H1 (cell line): ENCODE measurements at regions of chr13 and their contacts with region 1.

Region 1: DNA sequence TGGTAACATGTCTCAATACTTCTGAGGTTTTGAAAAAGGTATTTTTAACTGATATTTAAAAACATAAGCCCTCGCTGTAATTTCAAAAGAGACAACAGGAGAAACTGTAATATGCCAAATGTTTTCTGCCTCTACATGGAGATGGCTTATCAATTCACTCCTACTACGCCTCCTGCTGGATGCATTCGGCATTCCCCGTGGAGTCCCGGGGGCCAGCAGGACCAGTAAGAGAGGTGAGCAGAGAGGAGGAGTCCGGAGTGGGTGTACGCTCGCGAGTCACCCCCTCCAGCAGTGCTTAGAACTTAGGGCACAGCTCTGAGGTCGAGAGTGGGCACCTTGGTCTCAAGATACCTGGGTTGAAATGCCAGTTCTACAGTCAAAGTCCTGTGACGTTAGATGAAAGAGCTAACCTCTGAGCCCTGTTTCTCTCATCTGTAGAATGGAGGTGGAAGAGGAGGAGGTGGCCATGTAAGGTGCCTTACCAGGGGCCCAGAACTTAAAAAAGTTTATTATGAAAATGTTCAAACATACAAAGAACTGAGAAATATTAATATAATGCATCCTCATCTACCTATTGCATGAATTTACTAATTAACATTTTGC is 110.2 kb downstream of the STK24 start:
- DNase-seq: peak in 1 of 2 experiments; percentile 94
- H3K4me3 ChIP-seq: no peak overlapping the region
- H3K27ac ChIP-seq: no peak overlapping the region
- H3K4me1 ChIP-seq: peaks cover 0 to 3% (median 1%) of the 10 kb centered on the region in 4 experiments; a peak in 2 of 7 replicates
- H3K27me3 ChIP-seq: no peaks in the 10 kb centered on the region
- CTCF ChIP-seq: peak; percentile 75 to 89 (median 87)
- EP300 ChIP-seq: no peak
- POLR2A ChIP-seq: no peak
- RAD21 ChIP-seq: peak; percentile 65 to 73

Region 2: GRCh38 chr13:98504371-98504963 is 37.7 kb after region 1 on chr13:
- CTCF ChIA-PET with region 1: interaction called, 14 read pairs
- POLR2A ChIA-PET with region 1: no interaction called
- DNase-seq: no peak
- H3K4me3 ChIP-seq: no peak overlapping the region
- H3K27ac ChIP-seq: no peak overlapping the region
- H3K4me1 ChIP-seq: peaks cover 6 to 22% (median 17%) of the 10 kb centered on the region in 4 experiments
- H3K27me3 ChIP-seq: no peaks in the 10 kb centered on the region
- CTCF ChIP-seq: no peak
- EP300 ChIP-seq: no peak
- POLR2A ChIP-seq: no peak
- RAD21 ChIP-seq: no peak

Region 3: DNA sequence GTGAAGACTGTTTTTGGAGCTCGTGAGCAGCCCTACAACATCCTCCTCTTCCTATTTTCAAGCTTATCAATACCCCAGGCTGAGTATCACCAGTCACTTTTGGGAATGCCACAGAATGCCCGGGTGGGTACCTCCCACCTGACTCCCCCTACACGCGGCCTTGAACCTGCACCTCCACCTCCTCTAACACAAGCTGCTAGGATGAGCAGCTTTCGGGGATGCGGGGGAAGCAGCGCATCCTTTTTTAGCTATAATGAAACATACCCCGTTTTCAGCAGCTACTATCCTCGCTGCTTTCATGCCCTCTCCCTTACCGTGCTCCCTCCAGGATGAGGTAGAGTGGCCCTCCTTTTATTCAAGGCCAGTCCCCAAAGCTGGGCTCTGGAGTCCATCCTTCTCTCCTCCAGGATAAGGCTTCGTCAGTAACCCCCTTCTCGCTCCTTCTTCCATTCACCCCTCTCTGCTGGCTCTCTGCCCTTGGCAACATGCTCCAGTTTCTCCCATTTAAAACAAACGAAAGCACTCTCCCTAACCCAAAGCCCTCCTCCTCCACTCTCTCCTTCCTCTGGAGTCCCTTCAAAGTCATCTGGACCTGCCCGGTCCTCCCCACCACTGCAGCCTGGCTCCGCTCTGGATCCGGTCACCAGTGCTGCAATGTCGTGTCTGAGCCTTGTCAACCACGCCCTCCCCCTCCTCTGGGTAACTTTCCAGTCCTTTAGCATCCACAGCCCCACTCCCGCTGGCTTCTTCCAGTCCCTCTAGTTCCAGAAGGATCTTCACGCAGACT is 54.9 kb after region 1 on chr13:
- CTCF ChIA-PET with region 1: interaction called, 13 read pairs
- POLR2A ChIA-PET with region 1: interaction called, 3 read pairs
- DNase-seq: no peak
- H3K4me3 ChIP-seq: no peak overlapping the region
- H3K27ac ChIP-seq: no peak overlapping the region
- H3K4me1 ChIP-seq: peaks cover 0 to 50% (median 24%) of the 10 kb centered on the region in 4 experiments; a peak in 6 of 7 replicates
- H3K27me3 ChIP-seq: no peaks in the 10 kb centered on the region
- CTCF ChIP-seq: no peak
- EP300 ChIP-seq: no peak
- POLR2A ChIP-seq: no peak
- RAD21 ChIP-seq: no peak

Region 4: GRCh38 chr13:98710521-98710920 is 243.8 kb after region 1 on chr13:
- CTCF ChIA-PET with region 1: no interaction called
- POLR2A ChIA-PET with region 1: no interaction called
- DNase-seq: no peak
- H3K4me3 ChIP-seq: no peak overlapping the region
- H3K27ac ChIP-seq: no peak overlapping the region
- H3K4me1 ChIP-seq: no peaks in the 10 kb centered on the region
- H3K27me3 ChIP-seq: no peaks in the 10 kb centered on the region
- CTCF ChIP-seq: no peak
- EP300 ChIP-seq: no peak
- POLR2A ChIP-seq: no peak
- RAD21 ChIP-seq: no peak

Region 5: GRCh38 chr13:99265821-99266426 is 799.2 kb after region 1 on chr13:
- CTCF ChIA-PET with region 1: no interaction called
- POLR2A ChIA-PET with region 1: no interaction called
- DNase-seq: no peak
- H3K4me3 ChIP-seq: no peak overlapping the region
- H3K27ac ChIP-seq: no peak overlapping the region
- H3K4me1 ChIP-seq: no peaks in the 10 kb centered on the region; a peak in 1 of 7 replicates
- H3K27me3 ChIP-seq: no peaks in the 10 kb centered on the region
- CTCF ChIP-seq: peak in 2 of 3 experiments; percentile 48 to 58; a peak in 2 of 4 replicates
- EP300 ChIP-seq: no peak
- POLR2A ChIP-seq: no peak
- RAD21 ChIP-seq: peak; percentile 77 to 80